ENCODE measurements at regions of chr21 and their contacts with region 1.

Region 1: GRCh38 chr21:44792702-44793591 is 8.7 kb downstream of the UBE2G2 start:
- DNase-seq: no peak
- H3K4me3 ChIP-seq: no peak overlapping the region
- H3K27ac ChIP-seq: no peak overlapping the region
- H3K4me1 ChIP-seq: peaks cover 9 to 26% (median 20%) of the 10 kb centered on the region in 4 donors
- H3K27me3 ChIP-seq: no peaks in the 10 kb centered on the region
- CTCF ChIP-seq: peak; percentile 65 to 84 (median 74)
- EP300 ChIP-seq: no peak
- POLR2A ChIP-seq: no peak

Region 2: DNA sequence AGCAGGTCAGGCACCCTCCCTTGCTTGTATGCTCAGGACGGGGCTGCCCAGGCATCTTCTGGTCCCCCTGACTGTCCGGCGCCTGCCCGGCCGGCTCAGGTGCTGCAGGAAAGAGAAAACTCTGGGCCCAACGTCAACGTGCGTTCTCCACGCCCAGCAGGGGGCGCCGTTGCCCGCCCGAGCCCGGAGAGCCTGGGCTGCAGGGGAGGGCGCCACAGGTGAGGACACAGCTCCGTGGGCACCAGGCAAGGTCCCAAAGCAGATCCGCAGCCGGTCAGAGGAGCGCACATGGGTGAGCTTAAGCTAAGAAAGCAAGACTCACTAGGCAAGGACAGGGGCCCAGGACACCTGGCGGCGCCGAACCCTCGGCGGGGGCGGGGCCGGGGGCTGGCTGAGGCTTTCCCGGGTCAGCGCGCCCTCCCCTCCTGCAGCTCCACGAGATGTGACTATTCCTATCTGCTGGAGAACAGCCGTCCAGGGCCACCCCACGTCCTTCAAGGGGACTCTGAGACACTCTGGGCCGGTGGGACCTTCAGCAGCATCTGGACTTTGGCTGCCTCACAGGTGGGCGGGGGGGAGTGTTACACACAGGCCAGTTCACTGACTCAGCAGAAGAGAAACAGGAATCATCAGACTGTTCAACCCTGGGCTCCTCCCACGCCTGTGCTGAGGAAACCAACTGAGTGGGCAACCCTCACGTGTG is 282.3 kb before region 1 on chr21:
- intact Hi-C with region 1: loop called (anchors 2 kb)
- DNase-seq: no peak
- H3K4me3 ChIP-seq: peak overlapping the region in 2 of 4 donors; percentile 7 to 16
- H3K27ac ChIP-seq: no peak overlapping the region
- H3K4me1 ChIP-seq: peaks cover 7 to 10% (median 8%) of the 10 kb centered on the region in 4 donors
- H3K27me3 ChIP-seq: peaks cover 0 to 64% (median 0%) of the 10 kb centered on the region in 4 donors
- CTCF ChIP-seq: peak; percentile 70 to 75 (median 71)
- EP300 ChIP-seq: no peak
- POLR2A ChIP-seq: no peak

Region 3: DNA sequence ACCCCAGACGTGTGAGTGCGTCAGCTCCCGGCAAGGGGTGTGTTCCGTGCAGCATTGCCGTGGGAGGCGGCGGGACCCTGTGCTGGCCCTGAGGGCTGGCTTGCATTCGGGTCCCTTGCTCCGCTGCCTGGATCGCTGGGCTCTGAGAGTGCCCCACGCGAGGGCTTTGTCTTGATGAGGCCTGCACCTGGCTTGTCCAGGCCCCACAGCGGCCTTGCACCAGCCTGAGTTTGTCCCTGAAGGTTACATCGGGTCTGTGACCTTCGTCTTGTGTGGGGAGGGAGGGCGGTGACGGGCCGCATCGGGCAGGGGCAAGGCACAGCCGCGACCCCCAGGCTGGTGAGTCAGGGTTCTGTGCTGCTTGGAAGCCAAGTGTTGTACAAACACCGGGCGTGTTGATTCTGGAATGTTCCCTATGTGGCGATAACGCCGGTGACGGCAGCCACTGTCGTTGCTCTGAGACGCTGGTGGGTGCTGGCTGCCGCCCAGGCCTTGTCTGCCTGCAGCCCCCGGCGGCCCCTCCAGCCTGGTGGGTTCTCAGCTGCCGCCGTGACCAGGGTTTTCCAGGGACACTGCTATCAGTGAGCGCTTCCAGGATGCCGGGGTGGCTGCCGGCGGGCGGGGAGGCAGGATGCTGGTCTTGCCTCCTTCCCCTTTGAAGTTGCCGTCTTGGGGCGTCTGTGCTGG is 189.8 kb after region 1 on chr21:
- intact Hi-C with region 1: no loop called
- DNase-seq: no peak
- H3K4me3 ChIP-seq: no peak overlapping the region
- H3K27ac ChIP-seq: peak overlapping the region in 1 of 4 donors; percentile 7
- H3K4me1 ChIP-seq: peaks cover 10 to 46% (median 32%) of the 10 kb centered on the region in 4 donors
- H3K27me3 ChIP-seq: no peaks in the 10 kb centered on the region
- CTCF ChIP-seq: no peak
- EP300 ChIP-seq: no peak
- POLR2A ChIP-seq: no peak

Measured in esophagus muscularis mucosa (tissue), 4 donors.